Activated T-helper 2 cell treated with anti-CD3 and anti-CD28 coated beads, Interferon-gamma antibody, Interleukin-2, Interleukin-4, amounts not matched to agents 10 μg/mL and 5 μg/mL and 100 μg/mL, durations not matched to agents 14 hours and 24 hours and 36 hours (primary cell): ENCODE measurements at regions of chr1 and their contacts with region 1.

Region 1: DNA sequence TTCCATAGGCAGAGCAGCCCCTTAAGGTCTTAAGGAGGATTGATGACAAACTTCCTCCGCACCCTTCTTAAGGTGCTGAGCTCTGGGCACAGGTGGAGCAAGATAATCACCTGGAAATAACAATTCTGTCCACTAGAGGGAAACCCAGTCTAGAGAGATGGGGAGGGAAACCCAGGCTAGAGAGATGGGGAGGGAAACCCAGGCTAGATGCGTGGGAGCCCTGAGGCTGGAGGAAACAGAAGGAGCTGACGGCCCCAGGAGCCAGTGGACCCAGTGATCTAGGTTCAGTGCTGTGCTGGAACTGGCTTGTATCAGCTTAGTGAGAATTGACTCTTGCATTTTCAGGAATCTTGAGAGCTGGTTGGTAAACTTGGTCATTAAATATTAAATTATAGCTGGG is 17.8 kb upstream of the MYCL start:
- DNase-seq: peak; percentile 14
- H3K4me3 Mint-ChIP-seq: no peak overlapping the region
- H3K27ac Mint-ChIP-seq: no peak overlapping the region
- H3K4me1 Mint-ChIP-seq: no peaks in the 10 kb centered on the region
- H3K27me3 Mint-ChIP-seq: peaks cover 4% of the 10 kb centered on the region

Region 2: GRCh38 chr1:39973503-39974135 is 54.1 kb after region 1 on chr1:
- intact Hi-C with region 1: loop called (anchors 1 kb)
- DNase-seq: peak; percentile 50
- H3K4me3 Mint-ChIP-seq: no peak overlapping the region
- H3K27ac Mint-ChIP-seq: no peak overlapping the region
- H3K4me1 Mint-ChIP-seq: peaks cover 5% of the 10 kb centered on the region
- H3K27me3 Mint-ChIP-seq: peaks cover 2% of the 10 kb centered on the region

Region 3: GRCh38 chr1:40032240-40032891 is 112.8 kb after region 1 on chr1:
- intact Hi-C with region 1: loop called (anchors 1 kb)
- DNase-seq: peak; percentile 34
- H3K4me3 Mint-ChIP-seq: no peak overlapping the region
- H3K27ac Mint-ChIP-seq: no peak overlapping the region
- H3K4me1 Mint-ChIP-seq: peaks cover 32% of the 10 kb centered on the region
- H3K27me3 Mint-ChIP-seq: peaks cover 11% of the 10 kb centered on the region